ENCODE measurements at regions of chr14 and their contacts with region 1.

Region 1: DNA sequence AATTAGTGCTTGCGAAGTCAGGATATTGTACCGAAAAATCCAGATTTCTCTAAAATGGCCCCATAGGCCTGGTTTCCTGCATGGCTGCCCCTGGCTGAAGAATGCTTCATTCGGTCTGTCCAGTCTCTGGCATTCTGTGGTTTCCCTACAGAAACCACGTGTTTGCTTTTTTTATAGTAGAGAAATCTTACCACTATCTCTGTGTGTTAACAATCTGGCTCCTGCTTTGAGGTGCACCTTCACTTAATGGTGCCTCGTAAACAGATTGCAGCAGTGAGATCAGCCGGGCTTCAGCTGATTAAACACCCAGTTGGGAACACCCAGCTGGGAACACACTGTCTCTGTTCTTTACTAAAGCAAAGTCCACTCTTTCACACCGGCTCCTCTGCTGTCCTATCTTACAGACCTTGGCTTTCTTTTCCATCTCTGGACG is 6.7 kb upstream of the DNAAF2 start:
- DNase-seq: no peak
- ATAC-seq: peak; percentile 69
- H3K4me3 ChIP-seq: no peak overlapping the region
- H3K27ac ChIP-seq: peak overlapping the region; percentile 70
- H3K4me1 ChIP-seq: peaks cover 19% of the 10 kb centered on the region
- H3K27me3 ChIP-seq: no peaks in the 10 kb centered on the region
- CTCF ChIP-seq: no peak

Region 2: GRCh38 chr14:49828640-49829039 is 186.9 kb after region 1 on chr14:
- CTCF ChIA-PET with region 1: no interaction called
- POLR2A ChIA-PET with region 1: no interaction called
- in situ Hi-C with region 1: no loop called
- intact Hi-C with region 1: loop called (anchors 2 kb)
- DNase-seq: no peak
- ATAC-seq: no peak
- H3K4me3 ChIP-seq: no peak overlapping the region
- H3K27ac ChIP-seq: no peak overlapping the region
- H3K4me1 ChIP-seq: no peaks in the 10 kb centered on the region
- H3K27me3 ChIP-seq: no peaks in the 10 kb centered on the region
- CTCF ChIP-seq: no peak